Sigmoid colon (tissue), 7 donors: ENCODE measurements at regions of chr22 and their contacts with region 1.

Region 1: DNA sequence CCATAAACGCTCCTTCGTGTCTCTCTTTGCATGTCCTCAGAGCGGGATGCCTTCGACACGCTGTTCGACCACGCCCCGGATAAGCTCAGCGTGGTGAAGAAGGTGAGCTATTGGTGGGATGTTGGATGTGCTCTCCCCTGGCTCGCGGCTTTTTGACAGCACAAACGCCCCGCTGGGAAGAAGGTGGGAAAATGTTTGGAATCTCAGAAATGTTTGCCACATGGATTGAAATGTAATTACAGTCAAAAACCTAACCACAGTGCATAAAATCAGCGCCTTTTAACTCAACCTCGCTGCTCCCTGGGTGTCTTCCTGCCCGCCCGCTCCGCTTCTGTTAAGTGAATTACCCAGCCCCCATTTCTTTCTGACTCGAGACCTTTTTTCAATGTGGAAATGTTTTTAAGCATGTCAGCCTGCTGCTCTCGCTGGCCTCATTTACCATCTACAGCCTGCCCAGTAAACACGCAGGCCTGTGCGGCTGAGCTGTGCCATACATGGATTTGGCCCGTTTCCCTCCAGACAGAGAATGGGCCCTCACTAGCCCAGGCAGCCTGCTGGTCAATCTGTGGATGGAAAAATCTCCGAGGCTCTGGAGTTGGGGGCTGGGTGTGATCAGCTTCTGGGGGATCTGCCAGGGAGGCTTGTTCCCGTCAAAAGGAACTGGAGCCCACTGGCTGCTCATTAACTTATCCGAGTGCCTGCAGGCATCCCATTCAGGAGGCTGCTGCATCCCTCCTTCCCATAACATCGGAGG is 32.7 kb upstream of the PARVG start:
- DNase-seq: peak; percentile 86
- H3K4me3 ChIP-seq: no peak overlapping the region
- H3K27ac ChIP-seq: peak overlapping the region in 3 of 4 donors; percentile 67 to 83 (median 82)
- H3K4me1 ChIP-seq: peaks cover 0 to 72% (median 65%) of the 10 kb centered on the region in 4 donors
- H3K27me3 ChIP-seq: no peaks in the 10 kb centered on the region
- CTCF ChIP-seq: peak in 1 of 4 experiments; percentile 15
- EP300 ChIP-seq: peak in 2 of 4 donors; percentile 12 to 47
- POLR2A ChIP-seq: no peak

Region 2: DNA sequence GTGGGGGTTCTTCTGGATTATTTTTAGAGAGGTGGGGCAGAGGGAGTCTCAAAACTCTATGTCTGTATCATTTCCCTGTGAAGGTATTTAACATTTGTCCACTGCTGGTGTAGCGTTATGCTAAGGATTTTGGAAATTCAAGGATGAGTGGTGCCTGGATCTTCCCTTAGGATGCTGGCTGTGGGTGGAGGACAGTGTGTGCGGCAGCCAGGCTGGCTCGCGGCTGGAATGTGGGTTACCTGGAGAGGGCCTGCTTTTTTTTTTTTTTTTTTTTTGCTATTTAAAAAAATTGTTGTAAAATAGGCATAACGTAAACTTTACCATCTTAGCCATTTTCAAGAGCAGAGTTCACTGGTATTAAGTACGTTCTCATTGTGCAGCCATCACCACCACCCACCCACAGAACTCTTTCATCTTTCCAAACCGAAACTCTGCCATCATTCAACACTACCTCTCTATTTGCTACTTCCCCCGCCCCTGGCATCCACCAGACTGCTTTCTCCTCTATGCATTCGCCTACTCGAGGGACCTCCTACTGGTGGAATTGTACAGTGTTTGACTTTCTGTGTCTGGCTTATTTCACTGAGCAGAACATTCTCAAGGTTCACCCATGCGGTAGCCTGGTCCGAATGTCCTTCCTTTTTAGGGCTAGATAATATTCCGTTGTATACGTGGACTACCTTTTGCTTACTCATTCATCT is 56.8 kb before region 1 on chr22:
- intact Hi-C with region 1: loop called (anchors 5 kb)
- DNase-seq: peak; percentile 62
- H3K4me3 ChIP-seq: no peak overlapping the region
- H3K27ac ChIP-seq: peak overlapping the region in 3 of 4 donors; percentile 55 to 75 (median 64)
- H3K4me1 ChIP-seq: peaks cover 0 to 51% (median 45%) of the 10 kb centered on the region in 4 donors
- H3K27me3 ChIP-seq: no peaks in the 10 kb centered on the region
- CTCF ChIP-seq: peak; percentile 16 to 33 (median 26)
- EP300 ChIP-seq: peak in 2 of 4 donors; percentile 5 to 47
- POLR2A ChIP-seq: no peak

Region 3: DNA sequence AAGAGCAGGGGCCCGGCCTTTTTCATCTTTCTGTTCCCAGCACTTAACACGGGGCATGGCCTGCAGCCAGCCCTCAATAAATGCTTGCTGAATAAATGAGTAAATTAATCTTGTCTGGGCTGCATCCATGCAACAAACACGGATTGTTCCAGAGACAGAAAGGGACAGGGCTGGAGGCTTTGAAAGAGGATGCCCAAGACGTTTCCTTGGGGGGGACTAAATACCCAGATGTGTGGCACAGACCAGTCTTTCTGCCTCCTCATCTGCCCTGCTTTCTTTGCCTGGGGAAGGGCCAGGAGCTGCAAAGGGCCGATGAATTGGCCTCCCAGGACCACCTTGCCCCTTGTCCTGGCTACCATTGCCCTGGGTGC is 124.4 kb after region 1 on chr22:
- intact Hi-C with region 1: loop called (anchors 5 kb)
- DNase-seq: no peak
- H3K4me3 ChIP-seq: no peak overlapping the region
- H3K27ac ChIP-seq: peak overlapping the region in 3 of 4 donors; percentile 43 to 64 (median 47)
- H3K4me1 ChIP-seq: peaks cover 0 to 45% (median 38%) of the 10 kb centered on the region in 4 donors
- H3K27me3 ChIP-seq: no peaks in the 10 kb centered on the region
- CTCF ChIP-seq: no peak
- EP300 ChIP-seq: no peak
- POLR2A ChIP-seq: no peak

Region 4: GRCh38 chr22:44309137-44309536 is 161.1 kb after region 1 on chr22:
- intact Hi-C with region 1: loop called (anchors 10 kb)
- DNase-seq: peak; percentile 84
- H3K4me3 ChIP-seq: peak overlapping the region in 1 of 4 donors; percentile 49
- H3K27ac ChIP-seq: peak overlapping the region; percentile 79 to 98 (median 92)
- H3K4me1 ChIP-seq: peaks cover 0 to 100% (median 96%) of the 10 kb centered on the region in 4 donors
- H3K27me3 ChIP-seq: no peaks in the 10 kb centered on the region
- CTCF ChIP-seq: no peak
- EP300 ChIP-seq: no peak
- POLR2A ChIP-seq: no peak

Region 5: GRCh38 chr22:44337678-44338004 is 189.6 kb after region 1 on chr22:
- intact Hi-C with region 1: loop called (anchors 10 kb)
- DNase-seq: peak; percentile 86
- H3K4me3 ChIP-seq: no peak overlapping the region
- H3K27ac ChIP-seq: peak overlapping the region in 3 of 4 donors; percentile 35 to 74 (median 58)
- H3K4me1 ChIP-seq: peaks cover 0 to 41% (median 39%) of the 10 kb centered on the region in 4 donors
- H3K27me3 ChIP-seq: peaks cover 0 to under 1% (median 0%) of the 10 kb centered on the region in 3 donors
- CTCF ChIP-seq: no peak
- EP300 ChIP-seq: no peak
- POLR2A ChIP-seq: no peak

Region 6: GRCh38 chr22:44357966-44358465 is 210.0 kb after region 1 on chr22:
- intact Hi-C with region 1: loop called (anchors 5 kb)
- DNase-seq: peak; percentile 91
- H3K4me3 ChIP-seq: peak overlapping the region in 1 of 4 donors; percentile 8
- H3K27ac ChIP-seq: peak overlapping the region; percentile 82 to 87 (median 86)
- H3K4me1 ChIP-seq: peaks cover 0 to 67% (median 58%) of the 10 kb centered on the region in 4 donors
- H3K27me3 ChIP-seq: no peaks in the 10 kb centered on the region
- CTCF ChIP-seq: no peak
- EP300 ChIP-seq: peak in 2 of 4 donors; percentile 67 to 77
- POLR2A ChIP-seq: no peak

Region 7: DNA sequence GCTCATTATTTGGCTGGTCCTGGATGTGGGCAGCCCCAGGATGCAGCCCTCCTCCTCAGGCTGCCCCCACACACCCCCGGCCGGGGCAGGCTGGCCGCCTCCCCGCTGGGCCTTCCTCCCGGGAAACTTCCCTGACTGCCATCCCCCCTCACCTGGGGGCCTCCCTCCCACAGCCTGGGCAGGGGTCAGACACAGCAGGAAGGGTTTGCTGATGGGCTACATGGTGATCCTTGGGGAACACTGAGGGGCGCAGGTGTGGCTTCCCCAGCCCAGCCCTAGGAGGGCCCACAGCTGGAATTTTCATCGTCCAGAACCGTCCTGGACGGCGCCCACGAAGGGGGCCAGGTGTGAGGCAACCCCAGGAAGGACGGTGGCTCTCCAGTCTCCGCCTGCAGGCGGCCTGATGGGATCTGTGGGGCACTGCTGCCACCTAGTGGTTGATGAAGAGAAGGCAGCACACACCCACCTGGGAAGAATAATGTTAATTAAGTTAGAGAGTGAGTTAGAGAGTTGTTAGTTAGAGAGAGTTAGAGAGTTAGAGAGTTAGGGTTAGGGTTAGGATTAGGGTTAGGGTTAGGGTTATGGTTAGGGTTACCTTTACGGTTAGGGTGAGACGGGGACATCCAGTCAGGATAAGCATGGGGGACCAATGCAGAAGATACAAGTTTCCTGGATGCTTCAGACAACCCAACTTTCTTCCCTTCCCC is 478.1 kb after region 1 on chr22:
- intact Hi-C with region 1: loop called (anchors 10 kb)
- DNase-seq: peak; percentile 83
- H3K4me3 ChIP-seq: no peak overlapping the region
- H3K27ac ChIP-seq: no peak overlapping the region
- H3K4me1 ChIP-seq: peaks cover 0 to 4% (median 0%) of the 10 kb centered on the region in 4 donors
- H3K27me3 ChIP-seq: peaks cover 0 to 15% (median 9%) of the 10 kb centered on the region in 3 donors
- CTCF ChIP-seq: peak; percentile 98 to 100 (median 99)
- EP300 ChIP-seq: no peak
- POLR2A ChIP-seq: no peak